ENCODE measurements at regions of chr1 and their contacts with region 1.

Region 1: DNA sequence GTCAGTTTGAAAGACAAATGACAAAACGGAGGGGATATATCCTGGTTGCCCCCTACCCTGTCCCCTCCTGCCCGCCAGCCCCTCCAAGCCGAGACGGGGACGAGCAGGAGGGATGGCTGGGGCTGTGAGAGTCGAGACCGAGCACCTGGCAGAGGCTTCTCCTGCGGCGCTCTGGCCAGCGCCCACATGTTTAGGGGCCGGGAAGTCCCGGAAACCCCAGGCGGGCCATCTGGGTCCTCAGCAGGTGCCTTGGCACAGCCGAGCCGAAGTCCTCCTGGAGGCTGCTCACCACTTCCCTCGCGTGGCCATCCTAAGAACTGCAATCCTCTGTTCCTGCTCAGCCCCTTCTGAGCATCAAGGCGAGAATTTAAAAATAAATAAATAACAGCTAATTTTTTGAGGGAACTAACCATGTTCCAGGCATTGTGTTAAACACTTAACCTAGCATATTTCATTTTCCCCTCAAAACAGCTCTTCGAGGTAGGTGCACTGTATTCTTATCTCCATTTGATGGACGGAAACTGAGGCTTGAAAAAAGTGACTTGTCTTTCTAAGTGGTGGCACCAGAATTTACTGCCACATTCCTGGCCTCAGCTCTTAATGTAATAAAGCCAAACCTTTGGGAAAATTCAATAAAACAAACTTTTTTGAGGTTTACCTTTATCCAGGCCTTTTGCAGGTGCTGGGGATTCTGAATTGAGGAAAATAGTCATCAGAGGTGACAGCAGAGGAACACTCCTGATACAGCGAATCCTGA is 3.5 kb upstream of the RIMS3 start:
- DNase-seq: peak; percentile 90
- ATAC-seq: peak; percentile 47
- H3K4me3 Mint-ChIP-seq: peak overlapping the region; percentile 54
- H3K27ac Mint-ChIP-seq: no peak overlapping the region
- H3K4me1 Mint-ChIP-seq: peaks cover 19% of the 10 kb centered on the region
- H3K27me3 Mint-ChIP-seq: peaks cover 3% of the 10 kb centered on the region; the same call in 1 of the 2 replicates
- CTCF ChIP-seq: peak; percentile 86

Region 2: DNA sequence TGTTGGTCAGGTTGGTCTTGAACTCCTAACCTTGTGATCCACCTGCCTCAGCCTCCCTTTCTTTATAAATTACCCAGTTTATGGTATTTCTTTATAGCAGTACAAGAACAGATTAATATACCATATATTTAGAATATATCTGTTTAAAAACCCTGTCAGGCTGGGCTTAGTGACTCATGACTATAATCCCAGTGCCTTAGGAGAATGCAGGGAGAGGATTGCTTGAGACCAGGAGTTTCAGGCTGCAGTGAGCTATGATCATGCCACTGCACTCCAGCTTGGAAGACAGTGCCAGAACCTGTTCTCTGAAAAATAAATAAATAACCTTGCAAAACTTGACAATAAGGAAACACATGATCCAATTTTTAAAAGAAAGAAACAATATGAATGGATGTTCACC is 93.6 kb before region 1 on chr1:
- CTCF ChIA-PET with region 1: no interaction called
- POLR2A ChIA-PET with region 1: no interaction called
- DNase-seq: no peak
- ATAC-seq: no peak
- H3K4me3 Mint-ChIP-seq: no peak overlapping the region
- H3K27ac Mint-ChIP-seq: no peak overlapping the region
- H3K4me1 Mint-ChIP-seq: peaks cover 2% of the 10 kb centered on the region; the same call in 1 of the 2 replicates
- H3K27me3 Mint-ChIP-seq: peaks cover 8% of the 10 kb centered on the region
- CTCF ChIP-seq: no peak

Region 3: DNA sequence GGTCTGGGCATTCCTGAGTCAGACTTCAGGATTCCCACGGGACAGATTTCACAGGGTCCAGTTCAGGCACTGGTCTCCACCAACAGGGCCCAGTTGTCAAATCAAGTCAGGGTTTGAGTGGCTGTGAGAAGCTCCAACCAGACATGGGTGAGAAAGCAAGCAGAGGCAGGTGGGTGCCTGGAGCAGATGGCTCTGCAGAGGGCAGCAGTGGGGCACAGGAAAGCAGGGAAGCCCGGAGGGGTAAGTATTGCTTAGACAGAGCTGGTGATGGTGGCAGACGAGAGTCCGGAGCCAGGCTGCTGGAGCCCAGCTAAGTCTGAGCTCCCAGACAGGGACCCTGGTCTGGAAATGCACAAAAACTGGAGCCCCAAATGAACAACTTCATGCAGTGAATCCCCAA is 43.9 kb before region 1 on chr1:
- CTCF ChIA-PET with region 1: interaction called, 33 read pairs
- POLR2A ChIA-PET with region 1: no interaction called
- DNase-seq: peak; percentile 45
- ATAC-seq: peak; percentile 89
- H3K4me3 Mint-ChIP-seq: no peak overlapping the region
- H3K27ac Mint-ChIP-seq: no peak overlapping the region
- H3K4me1 Mint-ChIP-seq: no peaks in the 10 kb centered on the region
- H3K27me3 Mint-ChIP-seq: no peaks in the 10 kb centered on the region
- CTCF ChIP-seq: no peak

Region 4: GRCh38 chr1:40630488-40631381 is 38.2 kb before region 1 on chr1:
- CTCF ChIA-PET with region 1: interaction called, 33 read pairs
- POLR2A ChIA-PET with region 1: no interaction called
- DNase-seq: peak; percentile 81
- ATAC-seq: peak; percentile 97
- H3K4me3 Mint-ChIP-seq: no peak overlapping the region
- H3K27ac Mint-ChIP-seq: no peak overlapping the region
- H3K4me1 Mint-ChIP-seq: no peaks in the 10 kb centered on the region
- H3K27me3 Mint-ChIP-seq: no peaks in the 10 kb centered on the region
- CTCF ChIP-seq: peak; percentile 66

Region 5: GRCh38 chr1:40650075-40650474 is 18.9 kb before region 1 on chr1:
- CTCF ChIA-PET with region 1: interaction called, 20 read pairs
- POLR2A ChIA-PET with region 1: interaction called, 4 read pairs
- DNase-seq: peak; percentile 76
- ATAC-seq: peak; percentile 87
- H3K4me3 Mint-ChIP-seq: no peak overlapping the region
- H3K27ac Mint-ChIP-seq: no peak overlapping the region
- H3K4me1 Mint-ChIP-seq: peaks cover 14% of the 10 kb centered on the region
- H3K27me3 Mint-ChIP-seq: no peaks in the 10 kb centered on the region
- CTCF ChIP-seq: peak; percentile 50

Region 6: DNA sequence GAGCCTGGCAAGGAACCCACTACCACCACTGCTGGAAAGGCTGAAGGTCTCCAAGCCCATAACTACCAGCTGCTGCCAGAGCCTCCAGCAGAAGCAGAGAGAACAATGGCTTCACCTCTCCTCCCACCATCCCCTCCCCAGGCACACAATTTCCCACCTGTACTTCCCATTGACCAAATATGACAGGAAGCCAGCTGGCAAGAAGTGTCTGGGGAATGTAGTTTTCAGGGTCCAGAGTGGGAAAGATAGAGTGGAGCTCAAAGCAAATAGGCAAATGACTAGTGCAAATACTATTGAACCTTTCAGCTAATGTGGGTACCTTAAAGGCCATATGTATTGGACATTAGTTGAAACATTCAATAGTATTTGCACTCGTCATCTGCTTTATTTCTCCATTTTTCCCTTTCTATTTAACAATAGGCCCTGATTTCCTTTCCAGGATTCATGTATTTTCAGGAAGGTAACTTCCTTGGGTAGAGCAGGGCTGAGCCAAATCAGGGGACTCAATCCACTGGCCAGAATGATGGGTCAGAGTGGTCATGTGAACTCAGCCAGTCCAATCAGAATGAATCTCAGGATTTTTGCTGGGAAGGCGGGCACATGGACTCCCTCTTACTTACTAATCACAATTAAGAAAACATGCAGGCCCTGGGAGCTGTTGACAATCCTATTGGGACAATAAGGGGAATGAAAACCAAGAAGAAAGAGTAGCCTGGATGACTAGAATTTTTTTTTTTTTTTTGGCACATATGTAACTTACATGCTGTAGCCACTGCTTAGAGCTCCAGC is 10.4 kb after region 1 on chr1:
- CTCF ChIA-PET with region 1: interaction called, 13 read pairs
- POLR2A ChIA-PET with region 1: interaction called, 3 read pairs
- DNase-seq: no peak
- ATAC-seq: 0 out of 2 replicates have a peak, but pooled peaks have one; percentile 38
- H3K4me3 Mint-ChIP-seq: no peak overlapping the region
- H3K27ac Mint-ChIP-seq: no peak overlapping the region
- H3K4me1 Mint-ChIP-seq: no peaks in the 10 kb centered on the region; the same call in 1 of the 2 replicates
- H3K27me3 Mint-ChIP-seq: no peaks in the 10 kb centered on the region
- CTCF ChIP-seq: no peak

Region 7: DNA sequence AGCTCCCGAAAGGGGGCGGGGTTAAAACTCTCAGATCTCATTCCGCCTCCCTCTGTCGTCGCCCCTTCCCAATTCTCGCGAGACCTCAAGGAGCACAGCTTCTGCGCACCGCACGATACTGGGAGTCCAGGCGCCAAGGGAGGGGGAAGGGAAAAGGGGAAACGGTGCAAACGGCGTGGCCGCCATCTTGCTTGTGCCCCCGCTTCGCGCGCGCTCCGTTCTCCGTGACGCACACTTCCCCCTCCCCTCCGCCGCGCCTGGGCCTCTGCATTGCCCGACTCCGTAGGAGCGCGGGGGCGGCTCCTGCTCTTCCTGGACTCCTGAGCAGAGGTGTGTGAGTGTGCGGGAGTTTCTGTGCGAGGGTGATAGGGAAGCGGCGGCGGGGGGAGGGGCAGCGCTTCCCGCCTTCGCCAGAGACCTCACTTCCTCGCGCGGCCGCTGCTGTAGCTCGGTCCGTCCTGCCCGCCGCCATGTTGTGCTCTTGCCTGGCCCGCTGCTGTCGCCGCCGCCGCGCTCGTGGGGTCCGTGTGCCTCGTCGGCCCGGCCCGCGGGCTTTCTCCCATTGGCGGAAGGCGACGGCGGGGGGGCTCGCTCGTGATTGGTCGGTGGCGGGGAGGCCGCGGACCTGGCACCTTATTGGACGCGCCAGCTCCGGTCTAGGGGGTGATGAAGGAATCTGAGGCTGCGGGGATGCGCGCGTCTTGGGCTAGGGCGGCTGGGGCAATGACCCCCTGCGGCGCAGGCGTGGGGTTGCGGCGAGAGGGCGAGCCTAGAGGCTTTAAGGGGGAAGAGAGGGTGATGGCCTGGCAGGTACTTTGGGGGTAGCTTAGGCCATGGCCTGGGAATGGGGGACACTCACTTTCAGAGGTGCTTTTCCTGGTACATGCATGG is 22.8 kb after region 1 on chr1 and contains the start of gene NFYC:
- CTCF ChIA-PET with region 1: interaction called, 13 read pairs
- POLR2A ChIA-PET with region 1: interaction called, 17 read pairs
- DNase-seq: peak; percentile 97
- ATAC-seq: peak; percentile 89
- H3K4me3 Mint-ChIP-seq: peak within 1 kb of the TSS; percentile 91
- H3K27ac Mint-ChIP-seq: peak within 1 kb of the TSS; percentile 98
- H3K4me1 Mint-ChIP-seq: peaks cover 57% of the 10 kb centered on the region
- H3K27me3 Mint-ChIP-seq: no peaks in the 10 kb centered on the region
- CTCF ChIP-seq: no peak
- total RNA-seq, gene NFYC: 46.5 to 47.5 TPM (median 47.4 TPM) in 3 replicates

Region 8: DNA sequence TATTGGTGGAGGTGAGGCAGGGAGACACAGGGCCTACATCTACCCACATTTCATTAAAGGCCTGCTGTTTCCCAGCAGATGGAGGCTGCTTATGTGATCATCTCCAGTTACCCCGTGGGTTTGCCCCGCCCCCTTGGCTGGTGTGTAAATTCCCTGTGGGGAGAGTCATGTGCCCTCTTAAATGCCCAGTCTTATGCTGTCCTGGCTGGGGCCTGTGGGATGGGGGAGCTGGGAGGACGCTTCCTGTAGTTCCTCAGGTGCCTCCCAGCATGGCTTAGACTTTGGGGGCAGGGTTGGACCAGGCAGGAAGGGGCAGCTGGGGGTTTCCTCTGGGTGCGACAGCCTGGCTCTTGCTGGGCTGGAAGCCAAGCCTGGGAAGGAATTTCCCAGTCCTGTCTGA is 208.8 kb after region 1 on chr1:
- CTCF ChIA-PET with region 1: no interaction called
- POLR2A ChIA-PET with region 1: no interaction called
- DNase-seq: no peak
- ATAC-seq: peak; percentile 74
- H3K4me3 Mint-ChIP-seq: no peak overlapping the region
- H3K27ac Mint-ChIP-seq: no peak overlapping the region
- H3K4me1 Mint-ChIP-seq: peaks cover 12% of the 10 kb centered on the region
- H3K27me3 Mint-ChIP-seq: peaks cover 9% of the 10 kb centered on the region
- CTCF ChIP-seq: no peak